MCF 10A (cell line): ENCODE measurements at regions of chr5 and their contacts with region 1.

Region 1: GRCh38 chr5:173615884-173616576 is 420 bp downstream of the BOD1 start:
- DNase-seq: peak; percentile 85
- H3K4me3 Mint-ChIP-seq: peak overlapping the region; percentile 78
- H3K27ac Mint-ChIP-seq: peak overlapping the region; percentile 77
- H3K4me1 Mint-ChIP-seq: peaks cover 38% of the 10 kb centered on the region
- H3K27me3 Mint-ChIP-seq: no peaks in the 10 kb centered on the region
- CTCF ChIP-seq: peak; percentile 70

Region 2: GRCh38 chr5:173331956-173332479 is 284.0 kb before region 1 on chr5:
- CTCF ChIA-PET with region 1: interaction called, 5 read pairs
- POLR2A ChIA-PET with region 1: interaction called, 29 read pairs
- intact Hi-C with region 1: loop called (anchors 1 kb)
- DNase-seq: peak; percentile 96
- H3K4me3 Mint-ChIP-seq: no peak overlapping the region
- H3K27ac Mint-ChIP-seq: peak overlapping the region; percentile 26
- H3K4me1 Mint-ChIP-seq: peaks cover 45% of the 10 kb centered on the region
- H3K27me3 Mint-ChIP-seq: no peaks in the 10 kb centered on the region
- CTCF ChIP-seq: peak; percentile 96

Region 3: GRCh38 chr5:173764321-173765029 is 148.4 kb after region 1 on chr5:
- CTCF ChIA-PET with region 1: interaction called, 6 read pairs
- POLR2A ChIA-PET with region 1: interaction called, 10 read pairs
- intact Hi-C with region 1: loop called (anchors 5 kb)
- DNase-seq: peak; percentile 99
- H3K4me3 Mint-ChIP-seq: peak overlapping the region; percentile 22
- H3K27ac Mint-ChIP-seq: peak overlapping the region; percentile 77
- H3K4me1 Mint-ChIP-seq: peaks cover 40% of the 10 kb centered on the region
- H3K27me3 Mint-ChIP-seq: no peaks in the 10 kb centered on the region
- CTCF ChIP-seq: no peak

Region 4: GRCh38 chr5:173925448-173926071 is 309.5 kb after region 1 on chr5:
- CTCF ChIA-PET with region 1: interaction called, 14 read pairs
- POLR2A ChIA-PET with region 1: interaction called, 9 read pairs
- intact Hi-C with region 1: loop called (anchors 1 kb)
- DNase-seq: peak; percentile 77
- H3K4me3 Mint-ChIP-seq: no peak overlapping the region
- H3K27ac Mint-ChIP-seq: no peak overlapping the region
- H3K4me1 Mint-ChIP-seq: peaks cover 47% of the 10 kb centered on the region
- H3K27me3 Mint-ChIP-seq: no peaks in the 10 kb centered on the region
- CTCF ChIP-seq: peak; percentile 66

Region 5: DNA sequence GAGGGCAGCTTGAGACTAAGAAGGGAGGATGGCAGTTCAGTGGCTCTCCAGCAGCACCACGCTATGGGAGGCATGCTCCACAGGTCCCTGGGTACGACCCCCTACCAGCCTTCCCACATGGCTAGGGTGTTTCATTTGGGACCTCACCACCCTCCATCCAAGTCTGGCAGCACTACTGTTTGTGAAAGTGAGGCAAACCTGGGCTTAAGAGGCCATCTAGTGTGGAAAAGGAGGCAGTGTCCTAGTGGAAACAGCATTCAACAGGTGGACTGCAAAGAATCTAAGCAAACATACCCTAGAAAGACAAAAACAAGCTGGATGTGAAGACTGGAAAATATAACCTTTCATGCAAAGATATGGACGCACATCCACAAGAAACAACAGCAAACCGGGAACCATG is 368.2 kb after region 1 on chr5:
- CTCF ChIA-PET with region 1: interaction called, 85 read pairs
- POLR2A ChIA-PET with region 1: interaction called, 8 read pairs
- intact Hi-C with region 1: loop called (anchors 1 kb)
- DNase-seq: peak; percentile 44
- H3K4me3 Mint-ChIP-seq: no peak overlapping the region
- H3K27ac Mint-ChIP-seq: no peak overlapping the region
- H3K4me1 Mint-ChIP-seq: no peaks in the 10 kb centered on the region
- H3K27me3 Mint-ChIP-seq: peaks cover 19% of the 10 kb centered on the region
- CTCF ChIP-seq: peak; percentile 59

Region 6: DNA sequence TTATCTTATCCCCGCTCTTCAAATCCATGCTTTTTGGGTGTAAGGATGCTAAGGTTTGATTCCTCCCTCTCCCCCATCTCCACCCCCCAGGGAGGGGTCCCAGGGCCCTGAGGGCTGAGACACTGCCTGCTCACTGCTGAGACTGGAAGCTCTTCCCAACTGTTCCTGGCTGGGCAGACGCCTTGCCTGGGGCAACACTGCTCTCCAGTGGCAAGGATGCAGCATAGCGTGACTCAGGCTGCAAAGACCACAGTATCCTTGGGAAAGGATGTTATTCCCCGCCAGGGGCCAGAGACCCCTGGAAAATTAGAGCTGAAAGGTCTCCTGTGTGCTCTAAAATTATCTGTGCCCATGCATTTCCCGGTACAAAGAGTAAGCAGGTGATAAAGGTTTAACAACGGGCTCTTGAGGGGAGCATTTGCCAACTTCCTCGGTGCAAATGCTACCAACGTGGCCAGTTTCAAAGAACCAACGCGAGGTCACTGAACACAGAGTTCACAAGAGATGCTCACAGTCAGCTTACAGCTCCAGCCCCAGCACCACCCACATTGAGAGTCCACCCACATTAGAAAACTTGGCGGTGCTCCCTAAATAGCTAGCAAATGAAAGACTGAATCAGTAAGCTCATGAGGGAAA is 701.3 kb after region 1 on chr5:
- CTCF ChIA-PET with region 1: interaction called, 30 read pairs
- POLR2A ChIA-PET with region 1: interaction called, 5 read pairs
- intact Hi-C with region 1: loop called (anchors 1 kb)
- DNase-seq: peak; percentile 70
- H3K4me3 Mint-ChIP-seq: no peak overlapping the region
- H3K27ac Mint-ChIP-seq: no peak overlapping the region
- H3K4me1 Mint-ChIP-seq: no peaks in the 10 kb centered on the region
- H3K27me3 Mint-ChIP-seq: peaks cover 71% of the 10 kb centered on the region
- CTCF ChIP-seq: peak; percentile 97